Cardiac septum (tissue), 1 donor: ENCODE measurements at regions of chr9 and their contacts with region 1.

Region 1: DNA sequence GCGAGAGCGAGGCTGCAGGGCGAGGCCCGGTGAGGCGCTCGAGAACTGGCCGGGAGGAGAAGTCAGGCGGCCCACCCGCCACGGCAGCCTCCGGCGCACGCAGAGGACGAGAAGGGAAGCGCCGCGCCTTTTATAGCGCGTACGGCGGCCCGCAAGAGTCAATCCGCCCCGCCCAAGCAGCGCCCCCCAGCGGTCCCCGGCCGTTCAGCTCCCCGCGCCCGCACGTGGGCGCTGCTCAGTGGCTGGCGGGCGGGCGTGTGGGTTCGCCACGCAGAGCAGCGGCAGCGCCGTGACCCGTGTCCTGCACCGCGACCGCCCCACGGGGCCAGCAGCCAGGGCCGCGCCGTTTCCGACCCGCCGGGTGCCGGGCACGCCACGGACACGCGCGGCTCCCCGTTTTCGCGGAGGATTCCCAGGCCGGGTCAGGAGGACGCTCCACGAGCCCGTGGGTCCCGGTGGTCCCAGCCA is 14.6 kb downstream of the LCN10 start:
- DNase-seq: peak; percentile 94

Region 2: DNA sequence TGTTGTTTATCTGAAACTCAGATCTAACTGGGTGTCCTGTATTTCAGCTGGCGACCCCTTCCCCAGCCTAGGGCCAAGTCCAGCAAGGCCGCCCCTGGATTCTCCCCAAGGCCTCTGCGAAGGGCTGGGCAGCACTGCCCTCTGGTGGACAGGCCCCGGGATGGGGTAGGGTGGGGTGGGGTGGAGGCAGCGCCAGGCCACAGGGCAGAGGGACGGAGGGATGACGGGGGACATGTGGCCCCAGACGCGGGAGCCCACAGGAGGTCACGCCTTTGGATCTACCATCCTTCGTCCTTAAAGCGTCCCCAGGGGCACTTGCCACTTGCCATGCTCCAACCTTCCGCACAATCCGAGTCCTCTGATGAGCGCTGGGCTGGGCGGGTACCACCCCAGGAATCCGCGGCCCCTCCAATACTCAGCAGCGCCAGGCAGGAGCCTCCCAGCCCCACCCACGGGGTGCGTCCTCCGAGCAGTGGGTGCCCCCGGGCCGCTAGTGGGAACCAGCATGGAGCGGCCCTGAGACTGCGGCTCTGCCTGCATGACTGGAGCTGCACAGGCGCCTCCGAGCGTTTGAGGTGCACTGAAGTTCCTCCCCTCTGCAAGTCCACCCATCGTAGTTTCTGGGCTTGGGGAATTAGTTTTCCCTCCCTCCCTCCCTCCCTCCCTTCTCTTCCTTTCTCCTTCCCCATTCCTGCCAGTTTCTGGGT is 33.7 kb before region 1 on chr9:
- intact Hi-C with region 1: loop called (anchors 5 kb)
- DNase-seq: no peak